ENCODE measurements at regions of chr22 and their contacts with region 1.

Region 1: GRCh38 chr22:29635734-29636357 is 32.4 kb downstream of the NF2 start:
- DNase-seq: no peak
- ATAC-seq: peak; percentile 66

Region 2: GRCh38 chr22:27842669-27843431 is 1793.0 kb before region 1 on chr22:
- intact Hi-C with region 1: no loop called
- DNase-seq: no peak
- ATAC-seq: peak; percentile 49

Region 3: DNA sequence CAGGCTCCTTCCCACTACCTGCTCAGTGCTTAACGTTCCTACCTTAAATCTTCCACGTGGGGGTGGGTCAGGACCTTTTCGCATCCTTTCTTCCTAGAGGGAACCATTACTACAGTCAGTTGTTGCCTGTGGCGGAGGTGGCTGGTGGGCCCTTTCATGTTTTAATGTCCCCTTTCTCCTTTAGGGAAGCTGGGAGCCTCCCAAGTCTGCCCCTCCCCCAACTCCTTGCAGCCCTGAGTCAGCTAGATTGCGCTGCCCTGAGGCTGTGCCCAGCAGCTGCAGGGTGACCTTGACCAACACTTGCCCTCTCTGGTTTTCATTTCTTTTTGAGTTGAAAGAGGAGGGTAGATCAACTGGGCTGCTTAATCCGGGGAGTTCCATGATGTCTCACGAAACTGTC is 154.2 kb before region 1 on chr22:
- intact Hi-C with region 1: no loop called
- DNase-seq: no peak
- ATAC-seq: no peak

Region 4: GRCh38 chr22:30079952-30080533 is 444.2 kb after region 1 on chr22 and contains the start of gene HORMAD2:
- intact Hi-C with region 1: loop called (anchors 10 kb)
- DNase-seq: no peak
- ATAC-seq: no peak
- total RNA-seq, gene HORMAD2: not detected